Body of pancreas (tissue), 4 donors: ENCODE measurements at regions of chr15 and their contacts with region 1.

Region 1: DNA sequence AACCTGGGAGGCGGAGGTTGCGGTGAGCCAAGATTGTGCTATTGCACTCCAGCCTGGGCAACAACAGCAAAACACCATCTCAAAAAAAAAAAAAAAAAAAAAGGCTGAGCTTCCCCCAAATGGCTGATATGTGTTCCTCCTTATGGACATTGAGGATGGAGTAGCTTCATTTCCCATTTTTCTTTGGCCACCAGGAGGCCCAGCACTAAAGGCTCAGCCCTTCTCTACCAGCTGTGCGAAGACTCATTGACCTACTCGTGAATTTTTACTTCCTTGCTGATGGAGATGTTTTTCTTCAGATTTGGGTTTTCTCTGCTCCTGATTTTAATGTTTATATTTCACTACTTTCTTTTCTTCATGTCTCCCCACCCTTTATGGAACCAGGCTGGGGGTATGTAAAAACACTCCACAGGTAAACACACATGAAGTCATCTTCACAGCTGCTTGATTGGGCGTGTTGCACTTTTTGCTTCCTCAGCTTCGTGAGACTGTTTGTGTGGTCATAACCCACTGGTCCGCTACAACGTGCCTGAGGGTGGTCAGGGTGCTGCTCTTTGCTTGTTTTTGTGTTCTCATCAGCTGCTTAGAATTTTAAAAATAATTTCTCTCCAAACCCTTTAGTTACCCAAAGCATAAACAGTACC is 13.5 kb downstream of the SEMA4B start:
- DNase-seq: peak in 1 of 4 donors; percentile 41
- ATAC-seq: no peak
- H3K4me3 ChIP-seq: no peak overlapping the region
- H3K27ac ChIP-seq: peak overlapping the region in 3 of 4 donors; percentile 90 to 92 (median 92)
- H3K4me1 ChIP-seq: peaks cover 65% of the 10 kb centered on the region
- H3K27me3 ChIP-seq: no peaks in the 10 kb centered on the region
- CTCF ChIP-seq: peak in 3 of 7 experiments; percentile 25 to 41 (median 37)
- POLR2A ChIP-seq: no peak

Region 2: GRCh38 chr15:90101969-90102890 is 112.4 kb before region 1 on chr15 and contains the start of gene IDH2:
- intact Hi-C with region 1: no loop called
- DNase-seq: peak; percentile 85 to 90 (median 88)
- ATAC-seq: peak; percentile 83
- H3K4me3 ChIP-seq: peak within 1 kb of the TSS; percentile 59 to 69
- H3K27ac ChIP-seq: peak within 1 kb of the TSS; percentile 95 to 99 (median 99)
- H3K4me1 ChIP-seq: peaks cover 85% of the 10 kb centered on the region
- H3K27me3 ChIP-seq: no peaks in the 10 kb centered on the region
- CTCF ChIP-seq: peak in 1 of 7 experiments; percentile 23
- POLR2A ChIP-seq: peak; percentile 89 to 97 (median 90)
- total RNA-seq, gene IDH2: 77.5 to 78.6 TPM

Region 3: GRCh38 chr15:90165659-90166421 is 48.8 kb before region 1 on chr15:
- intact Hi-C with region 1: loop called (anchors 5 kb)
- DNase-seq: peak; percentile 50 to 94 (median 78)
- ATAC-seq: peak; percentile 60
- H3K4me3 ChIP-seq: no peak overlapping the region
- H3K27ac ChIP-seq: peak overlapping the region; percentile 45 to 82 (median 65)
- H3K4me1 ChIP-seq: peaks cover 25% of the 10 kb centered on the region
- H3K27me3 ChIP-seq: no peaks in the 10 kb centered on the region
- CTCF ChIP-seq: no peak
- POLR2A ChIP-seq: no peak

Region 4: DNA sequence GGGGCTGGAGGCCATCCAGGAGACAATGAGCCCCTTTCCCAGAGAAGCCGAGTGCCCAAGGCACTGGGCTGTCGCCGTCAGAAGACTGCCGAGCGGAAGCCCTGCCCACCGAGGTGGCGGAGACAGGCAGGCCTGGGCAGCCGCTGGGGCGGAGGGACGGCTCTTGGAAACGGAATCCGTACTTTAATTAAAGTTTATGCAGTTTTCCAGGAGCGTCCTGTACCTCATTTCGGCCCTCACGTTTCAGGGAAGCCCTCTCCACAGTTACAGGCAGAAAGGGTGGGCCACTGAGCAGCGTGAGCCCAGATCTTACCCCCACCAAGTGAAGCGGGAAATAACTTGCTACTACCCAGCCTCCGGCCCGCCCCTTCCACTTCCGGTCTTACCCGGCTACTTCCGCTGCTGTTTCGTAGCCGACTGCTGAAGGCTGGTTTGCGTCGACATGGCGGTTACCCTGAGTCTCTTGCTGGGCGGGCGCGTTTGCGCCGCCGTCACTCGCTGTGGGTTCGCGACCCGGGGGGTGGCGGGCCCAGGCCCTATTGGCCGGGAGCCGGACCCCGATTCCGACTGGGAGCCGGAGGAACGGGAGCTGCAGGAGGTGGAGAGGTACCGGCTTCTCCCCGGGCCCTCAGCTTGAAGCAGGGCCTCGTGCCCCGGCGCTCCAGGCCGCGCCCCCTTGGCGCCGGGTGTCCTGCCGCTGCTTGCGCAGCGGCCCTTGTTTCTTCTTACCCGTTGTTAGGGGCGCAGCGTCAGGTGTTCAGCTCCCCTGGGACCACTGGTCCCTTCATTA is 50.8 kb after region 1 on chr15 and contains the start of gene NGRN:
- intact Hi-C with region 1: no loop called
- DNase-seq: peak; percentile 87 to 93 (median 90)
- ATAC-seq: peak; percentile 94
- H3K4me3 ChIP-seq: peak within 1 kb of the TSS; percentile 47 to 60
- H3K27ac ChIP-seq: peak within 1 kb of the TSS; percentile 88 to 95 (median 92)
- H3K4me1 ChIP-seq: peaks cover 42% of the 10 kb centered on the region
- H3K27me3 ChIP-seq: no peaks in the 10 kb centered on the region
- CTCF ChIP-seq: no peak
- POLR2A ChIP-seq: peak; percentile 69 to 89 (median 87)
- total RNA-seq, gene NGRN: 27.4 to 27.8 TPM